Heart right ventricle (tissue), 16 donors: ENCODE measurements at regions of chr18 and their contacts with region 1.

Region 1: DNA sequence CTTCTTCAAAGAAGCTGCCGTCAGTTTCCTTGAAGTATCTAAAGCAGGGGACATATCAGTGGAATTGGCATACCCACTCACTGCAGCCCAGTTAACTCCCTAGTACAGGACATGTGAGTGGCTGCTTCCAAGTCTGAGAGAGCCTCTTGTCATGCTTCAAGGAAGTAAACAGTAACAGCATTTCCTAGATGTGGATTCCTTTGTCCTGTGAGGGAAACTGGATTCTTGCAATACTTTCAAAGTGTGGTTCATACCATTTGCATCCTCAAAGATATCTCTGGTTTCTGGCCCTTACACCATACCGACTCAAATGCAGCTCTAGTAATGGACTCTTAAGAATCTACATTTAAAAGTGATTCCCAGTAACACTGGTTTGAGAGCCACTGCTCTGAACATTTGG is 87.2 kb downstream of the ESCO1 start:
- DNase-seq: no peak
- ATAC-seq: no peak
- H3K4me3 ChIP-seq: no peak overlapping the region
- H3K27ac ChIP-seq: no peak overlapping the region
- H3K4me1 ChIP-seq: no peaks in the 10 kb centered on the region
- H3K27me3 ChIP-seq: no peaks in the 10 kb centered on the region
- CTCF ChIP-seq: no peak

Region 2: GRCh38 chr18:21179590-21180220 is 333.6 kb before region 1 on chr18:
- intact Hi-C with region 1: no loop called
- DNase-seq: peak in 1 of 2 donors; percentile 56
- ATAC-seq: peak in 7 of 8 donors; percentile 28 to 79 (median 64)
- H3K4me3 ChIP-seq: no peak overlapping the region
- H3K27ac ChIP-seq: no peak overlapping the region
- H3K4me1 ChIP-seq: peaks cover 0 to 5% (median 0%) of the 10 kb centered on the region in 9 donors
- H3K27me3 ChIP-seq: no peaks in the 10 kb centered on the region
- CTCF ChIP-seq: peak; percentile 55 to 79 (median 71)

Region 3: GRCh38 chr18:21538230-21538629 is 24.9 kb after region 1 on chr18:
- intact Hi-C with region 1: loop called in 1 of 10 experiments (anchors 2 kb)
- DNase-seq: no peak
- ATAC-seq: no peak
- H3K4me3 ChIP-seq: no peak overlapping the region
- H3K27ac ChIP-seq: no peak overlapping the region
- H3K4me1 ChIP-seq: no peaks in the 10 kb centered on the region
- H3K27me3 ChIP-seq: no peaks in the 10 kb centered on the region
- CTCF ChIP-seq: no peak